ENCODE measurements at regions of chr3 and their contacts with region 1.

Region 1: DNA sequence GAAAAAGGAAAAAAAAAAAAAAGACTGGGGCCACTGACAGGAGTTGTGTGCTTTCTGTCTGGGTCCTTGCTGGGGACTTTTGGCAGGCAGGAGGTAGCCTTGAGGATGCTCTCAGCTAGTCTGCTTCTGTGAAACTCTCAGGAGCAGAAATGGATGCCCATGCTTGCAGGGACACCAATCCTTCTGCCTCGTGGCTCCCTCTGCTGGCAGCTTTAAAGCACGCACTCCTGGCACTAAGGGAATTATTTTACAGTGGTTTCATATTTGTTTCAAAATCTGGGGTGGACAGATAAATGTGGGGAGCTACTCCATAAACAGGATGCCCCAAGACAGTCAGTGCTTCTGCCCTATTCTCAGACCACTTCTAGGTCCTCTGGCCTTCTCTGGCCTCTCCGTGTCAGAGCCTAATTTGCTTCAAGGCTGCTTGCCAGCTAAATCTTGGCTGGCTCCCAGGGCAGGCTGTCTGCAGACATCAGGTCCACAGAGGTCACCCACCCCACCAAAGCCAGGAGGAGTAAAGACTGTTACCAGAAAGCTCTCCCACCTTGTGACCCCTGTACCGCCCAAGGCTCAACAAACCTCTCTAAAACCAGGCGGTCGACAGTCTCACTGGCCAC is 17.1 kb downstream of the TRAIP start:
- DNase-seq: peak; percentile 85
- H3K4me3 Mint-ChIP-seq: no peak overlapping the region
- H3K27ac Mint-ChIP-seq: no peak overlapping the region
- H3K4me1 Mint-ChIP-seq: no peaks in the 10 kb centered on the region
- H3K27me3 Mint-ChIP-seq: no peaks in the 10 kb centered on the region
- CTCF ChIP-seq: peak; percentile 84

Region 2: GRCh38 chr3:49723628-49724551 is 115.4 kb before region 1 on chr3 and contains the start of gene GMPPB:
- CTCF ChIA-PET with region 1: interaction called, 4 read pairs
- POLR2A ChIA-PET with region 1: interaction called, 4 read pairs
- intact Hi-C with region 1: loop called (anchors 5 kb)
- DNase-seq: peak; percentile 97
- H3K4me3 Mint-ChIP-seq: peak within 1 kb of the TSS; percentile 83
- H3K27ac Mint-ChIP-seq: peak within 1 kb of the TSS; percentile 78
- H3K4me1 Mint-ChIP-seq: peaks cover 14% of the 10 kb centered on the region
- H3K27me3 Mint-ChIP-seq: no peaks in the 10 kb centered on the region
- CTCF ChIP-seq: no peak
- total RNA-seq, gene GMPPB: 84.3 and 88.1 TPM in 2 replicates

Region 3: DNA sequence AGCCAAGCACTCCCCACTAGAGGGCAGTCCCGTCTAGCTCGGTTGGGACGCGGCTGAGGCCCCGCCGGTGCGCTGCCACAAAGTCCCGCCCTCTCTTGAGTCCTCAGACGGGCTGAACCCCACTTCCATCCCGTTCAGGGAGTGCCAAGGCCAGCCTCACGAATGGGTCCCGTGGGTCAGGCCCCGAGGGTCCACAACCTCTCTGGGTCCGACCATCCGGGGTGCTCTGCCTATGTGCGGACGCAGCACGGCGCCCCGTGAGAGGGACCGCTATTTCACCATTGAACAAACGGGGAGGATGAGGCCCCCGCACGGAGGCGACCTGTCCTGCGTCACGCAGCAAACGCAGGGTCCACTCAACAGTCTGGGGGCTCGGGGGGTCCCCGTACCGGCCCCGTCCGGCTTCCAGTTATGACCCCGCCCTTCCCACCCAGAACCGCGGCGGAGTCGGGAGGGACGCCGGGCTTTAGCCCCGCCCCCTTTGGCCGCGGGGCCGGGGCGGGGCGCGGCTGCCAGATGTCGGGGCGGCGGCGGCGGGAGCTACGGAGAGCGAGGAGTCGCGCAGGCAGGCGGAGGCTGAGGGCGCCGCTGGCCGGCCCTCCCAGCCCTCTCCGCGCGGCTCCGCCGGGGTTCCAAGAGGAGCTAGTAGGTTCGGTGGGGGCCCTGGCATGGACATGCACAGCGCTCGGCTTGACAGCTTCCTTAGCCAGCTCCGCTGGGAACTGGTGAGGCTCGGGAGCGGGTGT is 36.4 kb before region 1 on chr3 and contains the start of gene INKA1:
- CTCF ChIA-PET with region 1: interaction called, 201 read pairs
- POLR2A ChIA-PET with region 1: interaction called, 30 read pairs
- intact Hi-C with region 1: loop called (anchors 1 kb)
- DNase-seq: peak; percentile 87
- H3K4me3 Mint-ChIP-seq: peak within 1 kb of the TSS; percentile 78
- H3K27ac Mint-ChIP-seq: peak within 1 kb of the TSS; percentile 71
- H3K4me1 Mint-ChIP-seq: peaks cover 24% of the 10 kb centered on the region
- H3K27me3 Mint-ChIP-seq: peaks cover 10% of the 10 kb centered on the region
- CTCF ChIP-seq: peak; percentile 74
- total RNA-seq, gene INKA1: 4.8 and 7.4 TPM in 2 replicates

Region 4: DNA sequence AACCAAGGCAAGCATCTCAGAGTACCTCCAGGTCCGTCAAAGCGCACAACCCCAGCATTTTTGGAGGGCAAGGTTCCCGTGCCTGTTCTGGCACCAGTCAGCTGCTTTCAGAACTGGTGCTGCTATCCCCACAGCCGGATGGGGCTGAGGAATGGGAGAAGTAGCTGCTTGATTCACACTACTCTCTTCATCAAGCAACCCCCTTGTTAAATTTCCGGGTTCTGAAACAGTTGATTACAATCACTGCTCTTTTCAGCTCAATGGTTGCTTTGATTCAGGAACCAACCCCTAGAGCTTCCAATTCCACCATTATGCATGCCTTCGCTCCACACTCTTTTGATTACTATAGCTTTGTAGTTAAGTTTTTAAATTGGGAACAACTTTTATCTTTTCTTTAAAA is 13.3 kb before region 1 on chr3:
- CTCF ChIA-PET with region 1: interaction called, 20 read pairs
- POLR2A ChIA-PET with region 1: no interaction called
- intact Hi-C with region 1: no loop called
- DNase-seq: no peak
- H3K4me3 Mint-ChIP-seq: no peak overlapping the region
- H3K27ac Mint-ChIP-seq: no peak overlapping the region
- H3K4me1 Mint-ChIP-seq: no peaks in the 10 kb centered on the region
- H3K27me3 Mint-ChIP-seq: no peaks in the 10 kb centered on the region
- CTCF ChIP-seq: no peak

Region 5: DNA sequence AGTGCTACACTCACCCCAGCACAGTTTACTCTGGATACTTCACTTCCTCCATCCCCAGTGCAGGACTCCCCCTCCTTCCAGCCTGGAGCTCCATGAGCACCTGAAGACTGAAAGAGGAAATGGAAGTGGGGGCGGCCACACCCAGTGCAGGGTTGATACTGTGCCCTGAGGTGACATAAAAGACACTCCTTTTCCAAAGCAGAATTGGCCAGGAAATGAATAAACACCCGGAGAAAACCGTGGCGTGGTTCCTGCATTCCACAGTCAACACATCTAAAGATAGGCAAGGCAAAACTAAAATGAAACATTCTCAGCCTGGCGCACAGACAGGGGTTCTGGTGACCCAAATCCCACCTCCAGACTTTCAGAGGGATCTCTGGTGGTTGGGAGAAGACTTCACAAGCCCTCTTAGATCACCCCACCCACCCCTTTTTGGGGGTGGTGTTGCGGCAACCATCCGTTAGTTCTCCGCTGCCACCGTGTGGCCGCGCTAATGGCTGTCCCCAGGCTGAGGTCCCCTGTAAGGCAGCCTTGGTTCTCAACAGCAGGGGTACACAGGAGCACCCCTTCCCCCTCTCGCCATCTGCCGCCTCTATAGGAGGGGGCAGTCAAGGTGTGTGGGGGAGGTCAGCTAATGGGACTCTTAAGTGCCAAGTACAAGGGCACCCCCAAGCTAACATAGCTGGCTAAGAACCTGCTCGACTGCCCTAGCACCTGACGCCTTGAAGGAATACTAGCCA is 66.9 kb after region 1 on chr3:
- CTCF ChIA-PET with region 1: interaction called, 143 read pairs
- POLR2A ChIA-PET with region 1: interaction called, 4 read pairs
- intact Hi-C with region 1: loop called (anchors 1 kb)
- DNase-seq: peak; percentile 72
- H3K4me3 Mint-ChIP-seq: peak overlapping the region; percentile 59
- H3K27ac Mint-ChIP-seq: peak overlapping the region; percentile 59
- H3K4me1 Mint-ChIP-seq: peaks cover 15% of the 10 kb centered on the region
- H3K27me3 Mint-ChIP-seq: no peaks in the 10 kb centered on the region
- CTCF ChIP-seq: peak; percentile 70